ENCODE measurements at regions of chr10 and their contacts with region 1.

Region 1: GRCh38 chr10:103592186-103593021 is 98.9 kb downstream of the NEURL1 start:
- DNase-seq: peak in 1 of 2 donors; percentile 50
- ATAC-seq: peak; percentile 51 to 63
- H3K4me3 ChIP-seq: no peak overlapping the region
- H3K27ac ChIP-seq: peak overlapping the region in 1 of 4 donors; percentile 22
- H3K4me1 ChIP-seq: peaks cover 9 to 13% of the 10 kb centered on the region in 2 donors
- H3K27me3 ChIP-seq: no peaks in the 10 kb centered on the region
- CTCF ChIP-seq: peak; percentile 55 to 78 (median 64)
- POLR2A ChIP-seq: no peak

Region 2: GRCh38 chr10:103416436-103417147 is 175.8 kb before region 1 on chr10:
- in situ Hi-C with region 1: loop called in 1 of 4 experiments (anchors 25 kb)
- intact Hi-C with region 1: loop called (anchors 2 kb)
- DNase-seq: peak in 1 of 2 donors; percentile 51
- ATAC-seq: peak; percentile 33 to 60
- H3K4me3 ChIP-seq: no peak overlapping the region
- H3K27ac ChIP-seq: no peak overlapping the region
- H3K4me1 ChIP-seq: no peaks in the 10 kb centered on the region
- H3K27me3 ChIP-seq: no peaks in the 10 kb centered on the region
- CTCF ChIP-seq: peak; percentile 23 to 71 (median 58)
- POLR2A ChIP-seq: no peak

Region 3: GRCh38 chr10:103470761-103471653 is 121.4 kb before region 1 on chr10:
- in situ Hi-C with region 1: no loop called
- intact Hi-C with region 1: no loop called
- DNase-seq: no peak
- ATAC-seq: peak in 1 of 2 donors; percentile 39
- H3K4me3 ChIP-seq: no peak overlapping the region
- H3K27ac ChIP-seq: no peak overlapping the region
- H3K4me1 ChIP-seq: no peaks in the 10 kb centered on the region
- H3K27me3 ChIP-seq: peaks cover 0 to 2% (median 0%) of the 10 kb centered on the region in 3 donors
- CTCF ChIP-seq: no peak
- POLR2A ChIP-seq: no peak

Region 4: DNA sequence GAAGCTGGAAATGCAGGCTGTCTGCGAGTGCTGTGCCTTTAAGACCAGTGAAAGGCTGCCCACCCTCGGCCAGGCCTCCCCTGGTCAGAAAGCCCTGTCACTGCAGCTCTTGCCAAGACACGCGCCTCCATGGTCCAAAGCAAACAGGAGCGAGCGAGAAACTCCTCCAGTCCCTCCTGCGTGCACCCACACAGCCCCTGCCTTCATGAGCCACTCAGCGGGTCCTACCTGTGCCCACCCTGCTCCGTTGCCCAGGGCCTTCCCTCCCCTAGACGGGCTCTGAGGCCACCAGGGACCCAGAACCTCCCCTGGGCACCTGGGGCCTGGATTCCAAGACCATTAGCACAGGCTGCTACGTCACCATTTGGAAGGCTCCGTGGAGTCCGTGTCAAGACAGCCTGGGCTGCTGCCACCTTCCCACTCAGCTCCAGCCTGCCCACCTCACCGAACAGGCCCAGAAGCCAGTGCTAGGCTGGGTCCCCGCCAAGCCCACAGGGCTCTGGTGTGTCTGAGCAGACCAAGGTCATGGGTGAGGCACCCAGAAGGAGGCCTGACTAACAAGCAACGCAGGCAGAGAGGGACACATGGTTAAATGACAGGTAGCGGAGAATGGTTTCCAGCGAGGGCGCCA is 45.6 kb after region 1 on chr10:
- in situ Hi-C with region 1: no loop called
- intact Hi-C with region 1: no loop called
- DNase-seq: peak in 1 of 2 donors; percentile 53
- ATAC-seq: no peak
- H3K4me3 ChIP-seq: no peak overlapping the region
- H3K27ac ChIP-seq: peak overlapping the region; percentile 19 to 37 (median 30)
- H3K4me1 ChIP-seq: peaks cover 57 to 62% of the 10 kb centered on the region in 2 donors
- H3K27me3 ChIP-seq: no peaks in the 10 kb centered on the region
- CTCF ChIP-seq: no peak
- POLR2A ChIP-seq: no peak